ENCODE measurements at regions of chr7 and their contacts with region 1.

Region 1: GRCh38 chr7:82729172-82730030 is 285.8 kb upstream of the CACNA2D1 start:
- H3K4me3 Mint-ChIP-seq: no peak overlapping the region
- H3K27ac Mint-ChIP-seq: no peak overlapping the region
- H3K4me1 Mint-ChIP-seq: no peaks in the 10 kb centered on the region
- H3K27me3 Mint-ChIP-seq: no peaks in the 10 kb centered on the region

Region 2: DNA sequence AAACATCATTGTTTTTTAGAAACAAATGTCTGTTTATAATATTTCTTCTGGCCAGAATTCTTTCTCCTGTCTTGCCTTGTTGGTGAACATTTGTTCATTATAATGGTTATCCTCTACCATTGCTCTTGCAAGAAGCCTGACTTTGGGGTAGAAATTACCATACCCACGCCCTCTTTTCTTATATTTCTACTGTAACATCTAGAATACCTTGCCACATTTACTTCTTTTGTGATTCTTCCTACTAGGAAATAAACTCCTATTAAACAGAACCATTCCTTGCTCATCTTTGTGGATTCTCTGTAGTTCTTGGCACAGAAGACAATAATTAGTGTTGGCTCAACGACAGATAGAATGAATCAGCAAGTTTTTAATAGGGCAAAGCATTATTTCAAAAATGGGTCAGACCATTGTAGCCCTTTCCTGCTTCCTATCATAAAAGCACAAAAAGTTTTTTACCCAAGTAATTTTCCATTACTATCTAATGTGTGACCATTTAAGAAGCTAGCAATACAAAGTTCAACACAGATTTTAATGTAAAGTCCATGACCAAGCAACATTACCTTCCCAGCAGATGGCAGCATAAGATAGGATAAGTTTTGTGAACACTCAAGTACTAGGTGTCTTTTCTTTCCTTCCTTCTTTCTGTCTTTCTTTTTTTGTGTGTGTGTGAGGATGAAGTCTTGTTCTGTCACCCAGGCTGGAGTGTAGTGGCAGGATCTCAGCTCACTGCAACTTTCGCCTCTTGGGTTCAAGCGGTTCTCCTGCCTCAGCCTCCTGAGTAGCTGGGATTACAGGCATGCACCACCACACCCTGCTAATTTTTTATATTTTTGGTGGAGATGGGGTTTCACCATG is 1229.9 kb before region 1 on chr7:
- intact Hi-C with region 1: loop called (anchors 5 kb)
- H3K4me3 Mint-ChIP-seq: no peak overlapping the region
- H3K27ac Mint-ChIP-seq: no peak overlapping the region
- H3K4me1 Mint-ChIP-seq: peaks cover 14% of the 10 kb centered on the region
- H3K27me3 Mint-ChIP-seq: no peaks in the 10 kb centered on the region

Region 3: GRCh38 chr7:82044497-82045080 is 684.8 kb before region 1 on chr7:
- intact Hi-C with region 1: loop called (anchors 2 kb)
- H3K4me3 Mint-ChIP-seq: no peak overlapping the region
- H3K27ac Mint-ChIP-seq: no peak overlapping the region
- H3K4me1 Mint-ChIP-seq: no peaks in the 10 kb centered on the region
- H3K27me3 Mint-ChIP-seq: no peaks in the 10 kb centered on the region

Region 4: DNA sequence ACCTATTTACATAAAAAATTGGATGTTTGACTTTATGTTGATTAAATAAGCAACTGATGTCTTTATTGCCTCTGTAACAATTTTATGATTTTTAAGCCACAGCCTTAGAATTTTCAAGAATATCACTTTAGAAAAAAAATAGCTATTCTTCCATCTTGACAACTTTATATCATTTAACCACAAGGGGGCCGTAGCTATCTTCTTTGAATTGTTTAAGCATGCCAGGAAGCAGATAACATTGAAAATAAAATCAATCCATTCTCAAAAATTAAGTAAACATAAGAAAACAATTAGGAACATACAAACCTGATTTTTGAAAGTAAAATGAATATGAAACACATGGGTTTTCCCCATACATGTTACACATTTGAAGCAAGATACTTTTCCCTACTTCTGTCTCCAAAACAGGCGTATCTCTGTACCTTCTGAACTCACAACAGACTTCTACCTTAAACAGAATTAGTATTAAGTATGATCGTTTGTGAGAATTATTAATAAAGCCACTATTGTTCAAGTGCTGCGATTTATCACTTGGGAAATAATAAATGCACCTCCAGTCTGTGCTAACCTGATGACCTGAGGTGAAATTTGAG is 494.8 kb before region 1 on chr7:
- intact Hi-C with region 1: loop called (anchors 2 kb)
- H3K4me3 Mint-ChIP-seq: no peak overlapping the region
- H3K27ac Mint-ChIP-seq: no peak overlapping the region
- H3K4me1 Mint-ChIP-seq: no peaks in the 10 kb centered on the region
- H3K27me3 Mint-ChIP-seq: no peaks in the 10 kb centered on the region

Region 5: GRCh38 chr7:82572195-82572880 is 157.1 kb before region 1 on chr7:
- intact Hi-C with region 1: loop called (anchors 10 kb)
- H3K4me3 Mint-ChIP-seq: no peak overlapping the region
- H3K27ac Mint-ChIP-seq: no peak overlapping the region
- H3K4me1 Mint-ChIP-seq: no peaks in the 10 kb centered on the region
- H3K27me3 Mint-ChIP-seq: peaks cover 4% of the 10 kb centered on the region

Region 6: DNA sequence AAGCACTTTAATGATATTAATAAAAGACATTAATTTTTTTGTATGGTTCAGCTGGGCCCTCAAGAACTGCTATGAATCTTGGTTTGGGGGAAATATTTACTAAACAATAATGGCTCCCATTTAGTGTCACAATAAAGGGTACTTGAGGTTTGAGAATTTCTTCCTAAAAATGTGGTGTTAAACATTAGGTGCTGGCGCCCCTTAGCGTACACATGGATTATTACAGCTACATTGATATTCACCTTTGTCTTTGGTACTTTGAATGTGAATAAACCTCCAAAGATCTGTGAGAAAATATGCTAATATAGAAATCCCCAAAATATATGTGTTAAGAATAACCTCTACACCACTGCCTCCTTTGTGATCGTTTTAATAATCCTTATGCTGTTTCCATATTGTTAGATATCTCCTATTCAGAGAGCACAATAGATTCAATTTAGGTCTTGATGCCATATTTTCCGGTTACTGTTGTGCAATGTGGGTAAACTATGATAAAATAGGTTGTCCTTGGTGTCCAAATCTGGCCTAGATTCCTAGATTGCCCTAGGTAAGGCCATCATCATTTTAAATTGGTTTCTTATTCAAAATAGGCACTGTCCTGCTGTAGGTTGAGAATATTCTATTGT is 124.0 kb before region 1 on chr7:
- intact Hi-C with region 1: loop called (anchors 10 kb)
- H3K4me3 Mint-ChIP-seq: no peak overlapping the region
- H3K27ac Mint-ChIP-seq: no peak overlapping the region
- H3K4me1 Mint-ChIP-seq: no peaks in the 10 kb centered on the region
- H3K27me3 Mint-ChIP-seq: no peaks in the 10 kb centered on the region

Region 7: GRCh38 chr7:82690944-82691343 is 38.5 kb before region 1 on chr7:
- intact Hi-C with region 1: no loop called
- H3K4me3 Mint-ChIP-seq: no peak overlapping the region
- H3K27ac Mint-ChIP-seq: no peak overlapping the region
- H3K4me1 Mint-ChIP-seq: no peaks in the 10 kb centered on the region
- H3K27me3 Mint-ChIP-seq: no peaks in the 10 kb centered on the region

Measured in dendritic cell treated with granulocyte-macrophage colony-stimulating factor and Interleukin-4, amounts not matched to agents 40 ng/mL and 50 ng/mL, for 4 days (primary cell).